Activated CD4-positive, alpha-beta T cell treated with anti-CD3 and anti-CD28 coated beads for 36 hours (primary cell): ENCODE measurements at regions of chr21 and their contacts with region 1.

Region 1: DNA sequence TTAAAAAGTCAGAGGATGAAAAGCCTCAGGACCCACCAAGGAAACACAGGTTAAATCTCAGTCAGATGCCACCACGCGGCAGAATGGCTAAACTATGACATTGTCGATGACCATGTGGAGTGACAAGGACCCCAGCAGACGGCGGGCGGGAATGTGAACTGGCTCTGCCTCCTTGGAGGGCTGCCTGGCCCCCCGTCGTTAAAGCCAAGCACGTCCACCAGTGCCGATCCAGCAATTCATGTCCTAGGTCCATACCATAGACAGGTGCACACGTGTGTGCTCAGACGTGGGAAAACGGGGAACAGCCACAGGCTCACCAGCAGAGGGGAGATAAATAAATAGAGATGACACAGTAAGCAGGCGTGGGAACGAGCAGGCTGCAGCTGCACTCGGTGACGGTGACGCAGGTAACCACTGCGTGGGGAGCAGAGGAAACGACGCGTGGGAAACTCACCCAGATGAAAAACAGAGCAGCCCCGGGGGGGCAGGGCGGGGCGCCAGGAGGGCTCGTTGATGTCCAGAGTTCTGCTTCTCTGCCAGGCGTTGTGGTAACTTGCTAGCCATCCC is 28.3 kb upstream of the PCBP3 start:
- DNase-seq: peak; percentile 90
- ATAC-seq: peak; percentile 91
- H3K4me3 Mint-ChIP-seq: peak overlapping the region; percentile 75
- H3K27ac Mint-ChIP-seq: peak overlapping the region; percentile 85
- H3K4me1 Mint-ChIP-seq: peaks cover 38% of the 10 kb centered on the region
- H3K27me3 Mint-ChIP-seq: no peaks in the 10 kb centered on the region

Region 2: DNA sequence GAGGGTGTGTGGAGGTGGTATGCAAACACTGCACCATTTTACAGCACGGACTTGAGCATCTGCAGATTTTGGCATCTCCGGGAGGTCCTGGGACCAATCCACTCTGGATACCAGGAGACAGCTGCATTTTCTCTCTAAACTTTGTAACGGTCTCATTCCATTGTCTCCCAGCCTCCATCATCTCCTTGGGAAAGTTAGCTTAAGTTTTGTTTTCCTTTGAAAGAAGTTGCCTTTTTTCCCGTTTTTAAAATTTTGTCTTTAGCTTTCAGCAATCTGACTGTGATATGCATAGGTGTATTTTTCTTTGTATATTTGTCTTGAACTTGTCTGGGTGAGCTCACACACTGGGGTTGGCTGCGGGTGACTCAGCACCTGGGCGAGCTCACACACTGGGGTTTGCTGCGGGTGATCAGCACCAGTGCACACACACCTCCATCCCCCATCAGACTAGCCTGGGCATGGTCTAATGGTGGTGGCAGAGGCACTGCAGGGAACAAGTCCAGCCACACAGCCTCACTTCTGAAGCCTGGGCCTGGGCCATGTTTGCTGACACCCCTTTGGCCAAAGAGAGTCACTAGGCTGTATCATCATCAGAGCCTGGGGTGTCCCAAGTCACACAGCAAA is 242.4 kb before region 1 on chr21:
- CTCF ChIA-PET with region 1: no interaction called
- POLR2A ChIA-PET with region 1: no interaction called
- intact Hi-C with region 1: loop called in 1 of 2 experiments (anchors 5 kb)
- DNase-seq: no peak
- ATAC-seq: no peak
- H3K4me3 Mint-ChIP-seq: no peak overlapping the region
- H3K27ac Mint-ChIP-seq: no peak overlapping the region
- H3K4me1 Mint-ChIP-seq: peaks cover 7% of the 10 kb centered on the region
- H3K27me3 Mint-ChIP-seq: peaks cover 2% of the 10 kb centered on the region

Region 3: DNA sequence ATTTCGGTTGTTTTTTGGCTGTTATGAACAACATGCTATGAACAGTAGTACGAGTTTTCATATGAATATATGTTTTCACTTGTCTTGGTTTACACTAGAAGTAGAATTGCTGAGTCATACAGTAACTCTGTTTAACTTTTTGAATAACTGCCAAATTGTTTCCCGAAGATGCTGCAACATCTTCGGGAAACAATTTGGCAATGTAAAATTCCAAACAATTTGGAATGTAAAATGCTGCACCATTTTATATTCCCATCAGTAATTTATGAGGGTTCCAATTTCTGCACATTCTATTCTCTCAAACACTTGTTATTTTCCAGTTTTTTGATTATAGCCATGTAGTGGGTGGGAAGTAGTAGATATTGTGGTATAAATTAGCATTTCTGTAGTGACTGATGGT is 39.9 kb after region 1 on chr21:
- CTCF ChIA-PET with region 1: no interaction called
- POLR2A ChIA-PET with region 1: no interaction called
- intact Hi-C with region 1: no loop called
- DNase-seq: no peak
- ATAC-seq: no peak
- H3K4me3 Mint-ChIP-seq: no peak overlapping the region
- H3K27ac Mint-ChIP-seq: no peak overlapping the region
- H3K4me1 Mint-ChIP-seq: peaks cover 12% of the 10 kb centered on the region
- H3K27me3 Mint-ChIP-seq: no peaks in the 10 kb centered on the region